A673 (cell line): ENCODE measurements at regions of chr11 and their contacts with region 1.

Region 1: DNA sequence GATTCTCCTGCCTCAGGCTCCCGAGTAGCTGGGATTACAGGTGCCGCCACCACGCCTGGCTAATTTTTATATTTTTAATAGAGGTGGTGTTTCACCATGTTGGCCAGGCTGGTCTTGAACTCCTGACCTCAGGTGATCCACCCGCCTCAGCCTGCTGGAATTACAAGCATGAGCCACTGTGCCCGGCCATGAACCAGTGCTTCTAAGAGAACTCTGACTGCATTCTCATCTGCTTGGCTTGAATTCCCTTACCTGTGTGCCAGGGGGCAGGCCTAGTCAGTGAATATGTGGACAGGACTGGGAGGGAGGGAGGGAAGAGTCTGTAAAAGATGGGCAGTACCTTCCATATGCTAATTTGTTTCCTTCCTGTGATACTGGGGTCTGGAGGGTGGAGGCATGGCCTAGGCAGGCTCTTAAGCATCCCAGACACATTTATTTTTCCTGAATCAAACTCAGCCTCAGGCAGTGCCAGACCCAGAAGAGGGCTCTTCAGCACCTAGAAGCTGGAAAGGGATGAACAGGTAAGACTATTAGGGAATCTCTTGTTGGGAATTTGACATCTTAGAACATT is 6.6 kb downstream of the RPS25 start:
- DNase-seq: no peak
- H3K4me3 ChIP-seq: no peak overlapping the region
- H3K27ac ChIP-seq: no peak overlapping the region
- H3K4me1 ChIP-seq: peaks cover 4% of the 10 kb centered on the region
- H3K27me3 ChIP-seq: no peaks in the 10 kb centered on the region
- CTCF ChIP-seq: no peak

Region 2: DNA sequence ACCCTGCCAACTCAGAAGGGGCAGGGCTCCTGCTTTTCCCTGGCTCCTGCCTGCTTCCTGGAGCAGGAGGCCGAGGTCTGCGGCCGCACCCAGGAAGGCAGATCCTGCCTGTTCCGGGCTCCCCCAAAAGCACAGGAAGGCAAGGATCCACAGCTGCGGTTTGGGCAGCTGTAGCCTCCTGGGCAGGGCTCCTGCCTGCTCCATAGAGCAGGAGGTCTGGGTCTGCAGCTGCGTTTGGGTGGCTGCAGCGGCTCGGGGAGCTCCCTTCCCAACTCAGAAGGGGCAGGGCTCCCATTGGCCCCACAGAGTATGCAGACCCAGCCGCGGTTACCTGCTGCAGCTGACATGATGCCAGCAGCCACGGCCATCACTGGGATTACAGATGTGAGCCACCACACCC is 50.0 kb before region 1 on chr11:
- CTCF ChIA-PET with region 1: no interaction called
- POLR2A ChIA-PET with region 1: no interaction called
- intact Hi-C with region 1: loop called (anchors 5 kb)
- DNase-seq: no peak
- H3K4me3 ChIP-seq: no peak overlapping the region
- H3K27ac ChIP-seq: no peak overlapping the region
- H3K4me1 ChIP-seq: no peaks in the 10 kb centered on the region
- H3K27me3 ChIP-seq: no peaks in the 10 kb centered on the region
- CTCF ChIP-seq: no peak